ENCODE measurements at regions of chr6 and their contacts with region 1.

Region 1: GRCh38 chr6:18264219-18264922 is at the start of gene DEK:
- DNase-seq: peak; percentile 95
- H3K4me3 Mint-ChIP-seq: peak within 1 kb of the TSS; percentile 95
- H3K27ac Mint-ChIP-seq: peak within 1 kb of the TSS; percentile 94
- H3K4me1 Mint-ChIP-seq: peaks cover 43% of the 10 kb centered on the region
- H3K27me3 Mint-ChIP-seq: no peaks in the 10 kb centered on the region
- total RNA-seq, gene DEK: 170 and 175 TPM in 2 replicates

Region 2: DNA sequence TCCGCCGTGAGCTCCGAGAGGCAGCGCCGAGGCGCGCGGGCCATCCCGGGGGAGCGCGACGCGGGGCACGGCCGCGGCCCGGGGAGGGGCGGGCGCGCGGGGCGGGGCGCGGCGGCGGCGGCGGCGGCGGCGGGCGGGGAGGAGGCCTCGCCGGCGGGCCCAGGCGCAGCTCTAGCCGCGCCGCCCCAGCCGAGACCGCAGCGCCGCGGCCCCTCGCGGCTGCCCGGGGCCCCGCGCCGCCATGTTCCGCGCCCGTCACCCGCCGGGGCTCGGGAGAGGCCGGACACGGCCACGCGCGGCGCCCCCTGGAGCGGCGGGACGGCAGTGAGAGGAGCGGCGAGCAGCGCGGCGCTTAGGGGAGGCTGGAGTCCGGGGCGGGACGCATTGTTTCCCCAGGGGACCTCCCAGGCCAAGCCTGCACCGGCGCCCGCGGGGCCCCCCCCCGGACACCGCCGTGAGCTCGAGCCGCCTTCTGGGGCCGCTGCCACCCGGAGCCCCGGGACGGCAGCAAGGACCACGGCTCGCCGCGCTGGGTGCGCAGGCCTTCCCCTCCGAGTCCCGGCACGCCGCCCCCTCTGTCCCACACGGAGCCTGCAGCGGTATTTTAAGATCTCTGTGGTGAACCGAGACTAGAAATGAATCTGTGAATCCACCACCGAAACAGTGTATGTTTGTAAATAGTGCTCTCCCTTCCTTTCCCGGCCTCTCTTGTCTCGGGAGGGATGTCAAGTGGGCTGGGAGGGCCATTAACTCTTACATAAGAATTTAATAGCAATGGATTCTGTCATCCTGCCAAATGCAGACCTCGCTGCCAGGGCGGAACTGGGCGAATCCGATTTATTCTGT is 276.6 kb before region 1 on chr6 and contains the start of gene KIF13A:
- intact Hi-C with region 1: loop called (anchors 5 kb)
- DNase-seq: peak; percentile 73
- H3K4me3 Mint-ChIP-seq: peak within 1 kb of the TSS; percentile 81
- H3K27ac Mint-ChIP-seq: no peak within 1 kb of the TSS
- H3K4me1 Mint-ChIP-seq: peaks cover 9% of the 10 kb centered on the region
- H3K27me3 Mint-ChIP-seq: peaks cover 63% of the 10 kb centered on the region
- total RNA-seq, gene KIF13A: not detected in 2 replicates

Region 3: GRCh38 chr6:18022398-18023231 is 241.8 kb before region 1 on chr6:
- intact Hi-C with region 1: no loop called
- DNase-seq: no peak
- H3K4me3 Mint-ChIP-seq: no peak overlapping the region
- H3K27ac Mint-ChIP-seq: no peak overlapping the region
- H3K4me1 Mint-ChIP-seq: no peaks in the 10 kb centered on the region
- H3K27me3 Mint-ChIP-seq: no peaks in the 10 kb centered on the region

Region 4: DNA sequence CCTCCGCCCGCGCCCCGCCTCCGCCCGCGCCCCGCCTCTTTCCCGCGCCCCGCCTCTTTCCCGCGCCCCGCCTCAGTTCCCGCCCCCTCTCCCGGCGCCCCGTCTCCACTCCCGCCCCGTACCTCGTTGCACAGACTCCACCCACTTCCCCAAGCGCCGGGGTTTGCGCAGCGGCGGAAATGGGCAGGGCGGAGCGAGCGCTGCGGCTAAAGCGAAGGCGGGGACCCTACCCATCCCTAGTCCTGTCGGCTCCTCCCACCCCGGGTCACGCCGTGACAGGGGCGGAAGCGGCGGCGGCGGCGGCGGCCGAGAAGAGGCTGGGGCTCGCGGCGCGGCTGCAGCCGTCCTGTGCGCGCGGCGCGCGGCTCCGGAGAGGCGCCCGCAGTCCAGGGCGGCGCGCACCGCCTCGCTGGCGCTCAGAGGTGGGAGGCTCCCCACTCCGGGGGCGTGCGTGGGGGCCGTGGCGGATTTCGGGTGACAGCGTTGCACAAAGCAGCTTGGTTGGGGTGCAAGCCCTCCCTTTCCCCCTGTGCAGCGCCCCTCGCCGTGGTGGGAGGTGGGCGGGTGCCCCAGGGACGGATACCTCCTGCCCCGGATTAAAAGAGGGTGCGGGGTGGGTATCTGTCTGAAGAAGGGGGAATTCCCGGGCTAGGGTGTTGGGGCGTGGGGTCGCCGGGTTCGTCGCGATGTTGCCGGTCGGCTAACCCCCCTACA is 109.1 kb before region 1 on chr6 and contains the start of gene KDM1B:
- intact Hi-C with region 1: loop called (anchors 1 kb)
- DNase-seq: peak; percentile 100
- H3K4me3 Mint-ChIP-seq: peak within 1 kb of the TSS; percentile 97
- H3K27ac Mint-ChIP-seq: peak within 1 kb of the TSS; percentile 92
- H3K4me1 Mint-ChIP-seq: peaks cover 20% of the 10 kb centered on the region
- H3K27me3 Mint-ChIP-seq: peaks cover 4% of the 10 kb centered on the region
- total RNA-seq, gene KDM1B: 8.5 and 8.6 TPM in 2 replicates

Region 5: GRCh38 chr6:18241208-18242038 is 22.9 kb before region 1 on chr6:
- intact Hi-C with region 1: loop called (anchors 2 kb)
- DNase-seq: peak; percentile 18
- H3K4me3 Mint-ChIP-seq: peak overlapping the region; percentile 38
- H3K27ac Mint-ChIP-seq: peak overlapping the region; percentile 43
- H3K4me1 Mint-ChIP-seq: peaks cover 51% of the 10 kb centered on the region
- H3K27me3 Mint-ChIP-seq: no peaks in the 10 kb centered on the region

Region 6: DNA sequence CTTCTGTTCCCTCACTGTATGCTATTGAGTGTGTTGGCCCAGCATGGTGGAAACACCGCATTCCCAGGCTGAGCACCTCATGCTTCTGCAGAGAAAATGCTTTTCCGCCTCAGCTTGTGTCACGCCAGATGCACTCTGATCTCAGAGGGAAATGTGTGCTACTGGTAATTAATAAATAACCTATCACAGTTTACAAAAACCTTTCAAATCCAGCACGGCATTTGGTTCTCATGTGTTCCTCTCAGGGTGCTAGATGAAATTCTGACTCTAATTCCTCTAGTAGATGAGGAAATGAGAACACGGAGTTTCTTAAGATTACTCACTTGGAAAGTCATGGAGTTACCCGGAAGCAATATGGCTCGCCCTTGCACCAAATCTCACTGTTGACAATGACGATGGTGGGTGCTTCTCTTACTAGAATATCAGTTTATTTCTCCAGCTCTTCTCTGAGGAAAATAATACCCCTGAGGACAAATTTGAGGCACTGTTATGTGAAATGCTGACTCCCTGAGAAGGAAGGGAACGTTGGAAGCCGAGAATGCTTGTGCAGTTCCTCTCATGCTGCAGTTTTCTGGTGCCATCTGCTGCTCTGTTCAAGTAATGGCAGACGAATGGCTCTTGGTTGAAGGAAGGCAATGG is 239.3 kb after region 1 on chr6:
- intact Hi-C with region 1: loop called (anchors 5 kb)
- DNase-seq: peak; percentile 74
- H3K4me3 Mint-ChIP-seq: no peak overlapping the region
- H3K27ac Mint-ChIP-seq: no peak overlapping the region
- H3K4me1 Mint-ChIP-seq: peaks cover 1% of the 10 kb centered on the region
- H3K27me3 Mint-ChIP-seq: peaks cover 13% of the 10 kb centered on the region

Measured in activated CD4-positive, alpha-beta T cell treated with anti-CD3 and anti-CD28 coated beads, Interleukin-2, amount 10 ng/mL, durations not matched to agents 24 days and 14 days (primary cell).